ENCODE measurements at regions of chr15 and their contacts with region 1.

Region 1: GRCh38 chr15:49421991-49422390 is 1.1 kb upstream of the FGF7 start:
- DNase-seq: peak in 8 of 14 experiments; percentile 5 to 67 (median 34)
- ATAC-seq: peak; percentile 41
- H3K4me3 ChIP-seq: no peak overlapping the region
- H3K4me3 Mint-ChIP-seq: peak overlapping the region; percentile 31
- H3K27ac ChIP-seq: no peak overlapping the region
- H3K27ac Mint-ChIP-seq: peak overlapping the region; percentile 67
- H3K4me1 ChIP-seq: no peaks in the 10 kb centered on the region
- H3K4me1 Mint-ChIP-seq: peaks cover 5% of the 10 kb centered on the region
- H3K27me3 ChIP-seq: no peaks in the 10 kb centered on the region
- H3K27me3 Mint-ChIP-seq: peaks cover 5% of the 10 kb centered on the region
- CTCF ChIP-seq: peak; percentile 72

Region 2: DNA sequence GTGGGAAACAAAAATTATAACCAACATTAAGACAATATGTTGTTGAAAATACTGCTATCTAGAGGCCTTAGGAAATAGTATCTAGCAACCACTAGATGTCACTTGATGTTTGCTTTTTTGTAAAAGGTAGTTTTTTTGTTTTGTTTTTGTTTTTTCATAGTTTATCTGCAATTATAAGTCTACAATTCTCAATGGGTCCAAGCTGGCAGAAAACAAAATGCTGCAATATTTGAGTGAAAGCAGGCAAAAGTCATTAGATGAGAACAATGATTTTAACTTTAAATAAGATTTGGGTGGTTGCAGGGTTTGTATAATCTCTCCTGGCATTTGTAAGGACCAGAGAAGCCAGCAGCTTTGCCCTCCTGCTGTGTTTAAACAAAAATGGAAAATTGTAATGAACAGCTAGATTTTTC is 1063.8 kb before region 1 on chr15:
- CTCF ChIA-PET with region 1: no interaction called
- POLR2A ChIA-PET with region 1: no interaction called
- intact Hi-C with region 1: loop called in 1 of 2 experiments (anchors 5 kb)
- DNase-seq: peak in 2 of 14 experiments; percentile 4
- ATAC-seq: no peak
- H3K4me3 ChIP-seq: no peak overlapping the region
- H3K4me3 Mint-ChIP-seq: no peak overlapping the region
- H3K27ac ChIP-seq: no peak overlapping the region
- H3K27ac Mint-ChIP-seq: no peak overlapping the region
- H3K4me1 ChIP-seq: no peaks in the 10 kb centered on the region
- H3K4me1 Mint-ChIP-seq: peaks cover 10% of the 10 kb centered on the region
- H3K27me3 ChIP-seq: no peaks in the 10 kb centered on the region
- H3K27me3 Mint-ChIP-seq: peaks cover under 1% of the 10 kb centered on the region
- CTCF ChIP-seq: peak; percentile 44

Region 3: DNA sequence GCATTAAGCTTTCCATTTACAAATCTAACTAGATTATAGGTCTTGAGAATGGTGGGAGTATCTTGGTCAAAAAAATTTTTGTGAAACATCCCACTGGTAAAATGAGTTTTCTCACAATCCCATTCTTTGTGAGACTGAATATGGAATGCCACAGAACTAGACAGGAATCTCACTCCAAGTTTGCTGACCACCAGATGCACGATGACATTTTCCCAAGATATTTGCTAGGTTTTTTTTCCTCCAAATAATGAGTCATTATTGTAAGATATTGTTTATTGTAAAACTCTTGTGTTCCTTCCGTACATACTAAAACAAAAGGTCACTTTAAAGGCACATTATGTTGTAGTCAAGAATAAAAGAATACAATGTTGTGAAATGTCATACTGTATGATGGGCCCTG is 320.5 kb before region 1 on chr15:
- CTCF ChIA-PET with region 1: no interaction called
- POLR2A ChIA-PET with region 1: no interaction called
- intact Hi-C with region 1: loop called in 1 of 2 experiments (anchors 10 kb)
- DNase-seq: no peak
- ATAC-seq: no peak
- H3K4me3 ChIP-seq: no peak overlapping the region
- H3K4me3 Mint-ChIP-seq: no peak overlapping the region
- H3K27ac ChIP-seq: no peak overlapping the region
- H3K27ac Mint-ChIP-seq: no peak overlapping the region
- H3K4me1 ChIP-seq: no peaks in the 10 kb centered on the region
- H3K4me1 Mint-ChIP-seq: no peaks in the 10 kb centered on the region
- H3K27me3 ChIP-seq: no peaks in the 10 kb centered on the region
- H3K27me3 Mint-ChIP-seq: no peaks in the 10 kb centered on the region
- CTCF ChIP-seq: no peak

Region 4: GRCh38 chr15:49145651-49146609 is 276.1 kb before region 1 on chr15:
- CTCF ChIA-PET with region 1: no interaction called
- POLR2A ChIA-PET with region 1: no interaction called
- intact Hi-C with region 1: loop called in 1 of 2 experiments (anchors 10 kb)
- DNase-seq: peak in 7 of 14 experiments; percentile 1 to 66 (median 46)
- ATAC-seq: peak; percentile 43
- H3K4me3 ChIP-seq: no peak overlapping the region
- H3K4me3 Mint-ChIP-seq: no peak overlapping the region
- H3K27ac ChIP-seq: no peak overlapping the region
- H3K27ac Mint-ChIP-seq: no peak overlapping the region
- H3K4me1 ChIP-seq: no peaks in the 10 kb centered on the region
- H3K4me1 Mint-ChIP-seq: peaks cover 64% of the 10 kb centered on the region
- H3K27me3 ChIP-seq: no peaks in the 10 kb centered on the region
- H3K27me3 Mint-ChIP-seq: no peaks in the 10 kb centered on the region
- CTCF ChIP-seq: peak; percentile 66

Region 5: DNA sequence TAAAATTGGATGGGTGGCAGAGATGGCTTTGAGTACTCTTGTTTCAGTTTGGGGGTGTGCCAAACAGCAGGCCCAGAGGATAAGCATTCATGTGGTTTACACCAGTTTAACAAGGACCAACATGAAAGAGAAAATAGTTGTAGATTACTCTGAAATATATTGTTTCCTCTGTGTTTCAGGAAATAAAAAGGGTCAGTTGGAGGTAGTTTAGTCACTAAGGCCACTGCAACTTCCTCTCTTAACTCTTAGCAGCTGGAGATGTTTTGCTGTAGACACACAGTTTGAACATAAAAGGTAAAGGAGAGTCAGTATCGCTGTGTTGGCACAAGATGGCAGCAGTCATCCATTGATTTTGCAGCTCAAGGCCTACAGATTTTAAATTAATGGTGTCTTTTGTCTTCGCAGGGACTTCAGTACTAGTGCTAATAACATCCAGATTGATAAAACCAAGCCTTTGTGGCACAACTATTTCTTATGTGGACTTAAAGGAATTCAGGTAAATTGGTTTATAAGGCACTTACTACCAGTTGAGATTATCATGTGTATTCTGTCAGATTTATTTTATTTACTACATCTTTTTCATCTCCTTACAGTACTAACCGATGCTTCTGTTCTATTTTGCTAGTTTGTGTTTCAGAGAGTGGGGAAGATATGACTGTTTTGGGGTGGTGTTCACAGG is 186.4 kb before region 1 on chr15:
- CTCF ChIA-PET with region 1: interaction called, 8 read pairs
- POLR2A ChIA-PET with region 1: no interaction called
- intact Hi-C with region 1: loop called in 1 of 2 experiments (anchors 1 kb)
- DNase-seq: peak; percentile 7 to 70 (median 25)
- ATAC-seq: peak; percentile 59
- H3K4me3 ChIP-seq: no peak overlapping the region
- H3K4me3 Mint-ChIP-seq: no peak overlapping the region
- H3K27ac ChIP-seq: no peak overlapping the region
- H3K27ac Mint-ChIP-seq: peak overlapping the region; percentile 3
- H3K4me1 ChIP-seq: no peaks in the 10 kb centered on the region
- H3K4me1 Mint-ChIP-seq: peaks cover 14% of the 10 kb centered on the region
- H3K27me3 ChIP-seq: no peaks in the 10 kb centered on the region
- H3K27me3 Mint-ChIP-seq: no peaks in the 10 kb centered on the region
- CTCF ChIP-seq: peak; percentile 52

Region 6: GRCh38 chr15:50145451-50145872 is 723.5 kb after region 1 on chr15:
- CTCF ChIA-PET with region 1: no interaction called
- POLR2A ChIA-PET with region 1: no interaction called
- intact Hi-C with region 1: loop called in 1 of 2 experiments (anchors 10 kb)
- DNase-seq: peak in 3 of 14 experiments; percentile 56 to 68 (median 65)
- ATAC-seq: no peak
- H3K4me3 ChIP-seq: no peak overlapping the region
- H3K4me3 Mint-ChIP-seq: no peak overlapping the region
- H3K27ac ChIP-seq: no peak overlapping the region
- H3K27ac Mint-ChIP-seq: no peak overlapping the region
- H3K4me1 ChIP-seq: no peaks in the 10 kb centered on the region
- H3K4me1 Mint-ChIP-seq: no peaks in the 10 kb centered on the region
- H3K27me3 ChIP-seq: peaks cover 0 to 5% of the 10 kb centered on the region in 2 experiments
- H3K27me3 Mint-ChIP-seq: no peaks in the 10 kb centered on the region
- CTCF ChIP-seq: peak; percentile 83